GM18951 (cell line): ENCODE measurements at regions of chr1 and their contacts with region 1.

Region 1: DNA sequence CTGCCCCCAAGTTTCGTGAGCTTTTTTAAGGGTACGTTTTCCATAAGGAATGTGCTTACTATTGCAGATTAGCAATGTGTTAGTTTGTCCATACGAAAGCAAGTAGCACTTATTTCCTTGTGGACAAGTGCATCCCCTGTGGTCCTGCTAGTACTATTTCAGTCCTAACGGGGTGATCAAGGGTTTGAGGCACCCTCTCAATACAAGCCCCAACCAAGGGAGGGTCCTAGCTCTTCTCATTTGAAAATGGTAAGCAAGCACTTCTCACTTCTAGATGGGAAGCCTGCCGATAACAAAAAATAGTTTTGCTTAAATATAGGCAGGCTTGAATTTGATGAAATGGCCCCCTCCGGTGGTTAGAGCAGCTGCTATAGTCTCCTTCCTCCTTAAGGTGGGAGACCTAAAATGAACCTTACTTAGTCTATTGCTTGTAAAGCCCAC is 64.0 kb upstream of the HMCN1 start:
- POLR2A ChIP-seq: no peak

Region 2: DNA sequence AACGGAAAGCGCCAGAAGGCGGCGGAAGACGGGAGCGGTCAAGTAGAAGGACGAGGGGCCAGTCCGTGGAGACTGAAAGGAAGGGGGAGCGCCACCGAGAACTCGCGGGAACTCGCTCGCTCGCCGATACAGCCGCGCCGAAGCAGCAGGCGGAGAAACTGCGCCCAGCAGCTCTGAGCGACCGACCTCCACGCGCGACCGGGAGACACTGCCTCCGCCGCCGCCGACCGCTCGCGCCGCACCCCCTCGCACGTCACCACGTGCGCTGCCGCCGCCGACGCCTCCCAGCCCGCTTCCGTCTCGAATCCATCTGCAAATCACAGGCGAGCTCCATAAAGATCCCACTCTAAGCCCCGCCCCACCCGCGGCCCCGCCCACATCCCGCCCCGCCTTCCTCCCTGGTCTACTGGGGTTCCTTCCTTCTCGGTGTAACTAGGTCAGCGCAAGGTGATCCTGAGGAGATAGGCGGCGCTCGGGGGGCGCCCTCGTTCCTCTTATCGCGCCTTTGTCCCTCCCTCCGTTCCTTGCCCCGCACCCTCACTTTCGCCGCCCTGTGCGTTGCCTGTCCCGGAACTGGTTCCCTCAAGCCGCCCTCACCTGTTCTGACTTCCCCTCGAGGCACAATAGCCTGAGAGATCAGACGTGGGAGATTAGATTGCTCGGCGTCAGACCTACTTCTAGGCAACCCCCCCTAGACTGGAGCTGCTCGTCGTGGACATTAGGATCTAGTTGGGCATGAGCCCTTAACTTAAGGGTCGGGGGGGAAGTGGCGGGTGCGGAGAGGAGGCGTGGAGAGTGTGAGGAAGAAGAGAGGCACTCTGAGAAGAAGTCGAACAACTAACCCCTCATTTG is 352.9 kb before region 1 on chr1 and contains the start of gene IVNS1ABP:
- in situ Hi-C with region 1: loop called (anchors 25 kb)
- POLR2A ChIP-seq: peak; percentile 97

Region 3: GRCh38 chr1:185880779-185881333 is 210.6 kb after region 1 on chr1:
- in situ Hi-C with region 1: no loop called
- POLR2A ChIP-seq: no peak

Region 4: GRCh38 chr1:185960422-185961321 is 290.5 kb after region 1 on chr1:
- in situ Hi-C with region 1: no loop called
- POLR2A ChIP-seq: no peak